ENCODE measurements at regions of chr2 and their contacts with region 1.

Region 1: GRCh38 chr2:69914170-69914960 is 544 bp upstream of the MXD1 start:
- DNase-seq: peak; percentile 100
- H3K4me3 ChIP-seq: peak overlapping the region; percentile 76 to 99 (median 94)
- H3K27ac ChIP-seq: peak overlapping the region; percentile 94 to 99 (median 98)
- H3K4me1 ChIP-seq: peaks cover 24 to 50% (median 47%) of the 10 kb centered on the region in 4 donors
- H3K27me3 ChIP-seq: no peaks in the 10 kb centered on the region
- CTCF ChIP-seq: peak in 2 of 3 experiments; percentile 7 to 32
- EP300 ChIP-seq: no peak
- POLR2A ChIP-seq: peak; percentile 89

Region 2: DNA sequence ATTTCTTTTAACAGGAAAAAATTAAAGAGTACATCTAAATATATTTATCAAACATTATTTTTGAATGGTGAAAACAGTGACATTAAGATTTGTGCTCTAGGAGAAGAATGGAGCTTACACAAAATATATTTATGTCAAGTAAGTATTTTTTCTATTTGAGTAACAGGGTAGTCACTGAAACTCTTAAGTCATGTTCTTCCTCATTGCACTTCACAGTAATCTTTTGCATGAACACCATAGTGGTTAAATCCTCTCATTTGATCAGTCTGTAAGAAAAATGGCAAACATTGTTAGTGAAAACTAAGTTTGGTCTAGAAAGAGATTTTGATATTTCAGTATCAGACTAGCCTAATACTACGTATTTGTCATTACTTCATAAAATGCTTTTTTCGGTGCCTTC is 76.8 kb before region 1 on chr2:
- intact Hi-C with region 1: no loop called
- DNase-seq: no peak
- H3K4me3 ChIP-seq: no peak overlapping the region
- H3K27ac ChIP-seq: no peak overlapping the region
- H3K4me1 ChIP-seq: peaks cover 0 to 11% (median 5%) of the 10 kb centered on the region in 4 donors
- H3K27me3 ChIP-seq: no peaks in the 10 kb centered on the region
- CTCF ChIP-seq: no peak
- EP300 ChIP-seq: no peak
- POLR2A ChIP-seq: no peak

Region 3: DNA sequence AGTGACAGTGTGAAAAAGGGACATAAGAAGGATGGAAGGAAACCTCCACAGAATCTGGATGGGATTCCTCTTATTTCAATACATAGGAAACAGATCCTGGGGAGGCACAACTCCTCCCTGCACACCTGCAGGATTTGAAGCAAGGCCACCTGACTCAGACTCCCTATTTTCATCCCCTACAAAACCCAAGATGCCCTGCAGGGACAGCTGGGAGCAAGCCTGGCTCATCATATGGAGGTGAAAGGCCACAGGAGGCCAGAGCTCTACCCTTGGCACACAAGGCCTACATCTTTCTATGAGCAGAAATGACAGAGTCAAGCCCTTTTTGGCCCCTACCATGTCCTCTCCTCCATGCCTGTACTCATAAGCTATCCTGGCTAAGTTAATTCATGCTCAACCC is 138.3 kb after region 1 on chr2:
- intact Hi-C with region 1: no loop called
- DNase-seq: no peak
- H3K4me3 ChIP-seq: no peak overlapping the region
- H3K27ac ChIP-seq: no peak overlapping the region
- H3K4me1 ChIP-seq: no peaks in the 10 kb centered on the region
- H3K27me3 ChIP-seq: no peaks in the 10 kb centered on the region
- CTCF ChIP-seq: no peak
- EP300 ChIP-seq: no peak
- POLR2A ChIP-seq: no peak

Region 4: DNA sequence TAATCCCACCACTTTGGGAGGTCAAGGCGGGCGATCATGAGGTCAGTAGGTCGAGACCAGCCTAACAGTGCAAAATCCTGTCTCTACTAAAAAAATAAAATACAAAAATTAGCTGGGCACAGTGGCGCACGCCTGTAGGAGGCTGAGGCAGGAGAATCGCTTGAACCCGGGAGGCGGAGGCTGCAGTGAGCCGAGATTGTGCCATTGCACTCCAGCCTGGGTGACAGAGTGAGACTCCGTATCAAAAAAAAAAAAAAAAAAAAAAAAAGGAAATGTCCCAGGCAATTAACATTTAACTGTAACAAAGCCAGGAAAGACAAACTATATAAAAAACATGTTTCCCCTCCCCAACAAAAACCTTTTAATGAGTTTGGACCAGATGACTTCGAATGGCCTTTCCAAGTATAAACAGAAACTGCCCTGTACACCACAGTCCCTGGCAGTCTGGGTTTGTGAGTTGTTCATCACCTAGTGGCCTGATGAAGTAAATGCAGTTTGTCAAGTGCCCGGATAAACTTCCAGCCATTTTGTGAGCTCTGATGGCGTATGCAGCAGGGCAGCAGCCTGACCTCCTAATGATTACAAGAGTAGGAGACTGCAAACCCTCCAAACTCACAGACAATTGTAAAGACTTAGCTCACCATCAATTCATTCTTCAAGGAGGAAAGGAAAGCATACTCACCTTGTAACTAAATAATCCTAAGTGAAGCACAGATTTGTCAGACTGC is 156.3 kb after region 1 on chr2:
- intact Hi-C with region 1: loop called (anchors 2 kb)
- DNase-seq: no peak
- H3K4me3 ChIP-seq: peak overlapping the region in 2 of 4 donors; percentile 11 to 26
- H3K27ac ChIP-seq: peak overlapping the region; percentile 56 to 80 (median 78)
- H3K4me1 ChIP-seq: peaks cover 6 to 36% (median 27%) of the 10 kb centered on the region in 4 donors
- H3K27me3 ChIP-seq: no peaks in the 10 kb centered on the region
- CTCF ChIP-seq: peak; percentile 76 to 92 (median 90)
- EP300 ChIP-seq: no peak
- POLR2A ChIP-seq: no peak

Region 5: DNA sequence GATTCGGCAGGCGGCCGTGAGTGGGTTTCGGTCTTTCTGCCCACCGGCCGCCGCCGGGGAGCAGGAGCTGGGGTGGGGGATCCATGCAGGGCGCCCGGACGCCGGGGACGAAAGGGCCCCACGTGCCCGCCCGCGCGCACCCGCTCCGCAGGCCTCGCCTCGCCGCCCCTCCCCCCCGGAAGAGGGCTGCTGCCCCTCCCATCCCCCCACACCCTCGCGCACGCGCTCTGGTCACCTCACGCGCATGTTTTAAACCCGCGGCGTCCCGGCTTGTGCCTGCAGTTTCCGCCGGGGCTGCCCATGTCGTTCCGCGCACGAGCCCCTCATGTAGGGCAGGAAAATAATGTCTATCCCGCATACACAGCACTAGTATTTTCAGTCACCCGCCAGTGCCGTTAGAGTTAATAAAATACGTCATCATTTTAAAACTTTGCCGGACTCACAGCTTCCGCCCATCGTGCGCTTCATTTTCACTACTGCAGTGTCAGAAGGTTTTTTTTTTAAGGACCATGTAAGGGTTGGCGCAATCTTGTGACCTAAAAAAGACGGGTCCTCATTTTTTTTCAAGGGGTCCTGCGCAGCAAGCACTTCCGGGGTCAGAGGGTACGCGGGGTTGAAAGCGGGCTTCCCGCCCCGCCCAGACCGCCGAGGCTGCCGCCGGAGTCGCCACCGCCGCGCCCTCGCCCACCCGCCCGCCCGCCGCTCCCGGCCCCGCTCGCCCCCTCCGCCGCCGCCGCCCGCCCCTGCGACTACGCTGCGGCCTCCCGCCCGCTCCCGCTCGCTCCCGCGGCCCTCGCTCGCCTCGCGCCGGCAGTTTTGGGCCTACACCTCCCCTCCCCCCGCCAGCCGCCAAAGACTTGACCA is 172.7 kb after region 1 on chr2 and contains the start of gene PCBP1:
- intact Hi-C with region 1: loop called (anchors 5 kb)
- DNase-seq: peak; percentile 98
- H3K4me3 ChIP-seq: peak within 1 kb of the TSS; percentile 74 to 90 (median 85)
- H3K27ac ChIP-seq: peak within 1 kb of the TSS; percentile 99 to 100 (median 100)
- H3K4me1 ChIP-seq: peaks cover 29 to 68% (median 59%) of the 10 kb centered on the region in 4 donors
- H3K27me3 ChIP-seq: no peaks in the 10 kb centered on the region
- CTCF ChIP-seq: no peak
- EP300 ChIP-seq: no peak
- POLR2A ChIP-seq: peak; percentile 96
- total RNA-seq, gene PCBP1: 156 to 220 (median 189) TPM

Region 6: GRCh38 chr2:70142590-70143313 is 228.4 kb after region 1 on chr2:
- intact Hi-C with region 1: loop called (anchors 2 kb)
- DNase-seq: peak; percentile 100
- H3K4me3 ChIP-seq: peak overlapping the region; percentile 76 to 91 (median 78)
- H3K27ac ChIP-seq: peak overlapping the region; percentile 98 to 99 (median 99)
- H3K4me1 ChIP-seq: peaks cover 21 to 26% (median 23%) of the 10 kb centered on the region in 4 donors
- H3K27me3 ChIP-seq: no peaks in the 10 kb centered on the region
- CTCF ChIP-seq: peak; percentile 95 to 99 (median 98)
- EP300 ChIP-seq: no peak
- POLR2A ChIP-seq: peak; percentile 82

Region 7: DNA sequence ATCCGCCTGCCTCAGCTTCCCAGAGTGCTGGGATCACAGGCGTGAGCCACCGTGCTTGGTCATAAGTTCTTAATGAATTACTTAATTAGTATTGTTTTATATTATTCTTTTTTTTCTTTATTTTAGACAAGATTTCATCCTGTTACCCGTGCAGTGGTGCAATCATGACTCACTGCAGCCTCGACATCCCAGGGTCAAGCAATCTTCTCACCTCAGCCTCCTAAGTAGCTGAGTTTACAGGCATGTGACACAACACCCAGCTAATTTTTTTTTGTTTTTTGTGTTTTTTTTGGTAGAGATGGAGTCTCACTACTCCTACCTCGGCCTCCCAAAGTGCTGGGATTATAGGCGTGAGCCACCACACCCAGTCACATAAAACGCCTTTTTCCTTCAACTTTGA is 259.2 kb after region 1 on chr2:
- intact Hi-C with region 1: no loop called
- DNase-seq: no peak
- H3K4me3 ChIP-seq: no peak overlapping the region
- H3K27ac ChIP-seq: no peak overlapping the region
- H3K4me1 ChIP-seq: no peaks in the 10 kb centered on the region
- H3K27me3 ChIP-seq: no peaks in the 10 kb centered on the region
- CTCF ChIP-seq: no peak
- EP300 ChIP-seq: no peak
- POLR2A ChIP-seq: no peak